ENCODE measurements at regions of chr4 and their contacts with region 1.

Region 1: DNA sequence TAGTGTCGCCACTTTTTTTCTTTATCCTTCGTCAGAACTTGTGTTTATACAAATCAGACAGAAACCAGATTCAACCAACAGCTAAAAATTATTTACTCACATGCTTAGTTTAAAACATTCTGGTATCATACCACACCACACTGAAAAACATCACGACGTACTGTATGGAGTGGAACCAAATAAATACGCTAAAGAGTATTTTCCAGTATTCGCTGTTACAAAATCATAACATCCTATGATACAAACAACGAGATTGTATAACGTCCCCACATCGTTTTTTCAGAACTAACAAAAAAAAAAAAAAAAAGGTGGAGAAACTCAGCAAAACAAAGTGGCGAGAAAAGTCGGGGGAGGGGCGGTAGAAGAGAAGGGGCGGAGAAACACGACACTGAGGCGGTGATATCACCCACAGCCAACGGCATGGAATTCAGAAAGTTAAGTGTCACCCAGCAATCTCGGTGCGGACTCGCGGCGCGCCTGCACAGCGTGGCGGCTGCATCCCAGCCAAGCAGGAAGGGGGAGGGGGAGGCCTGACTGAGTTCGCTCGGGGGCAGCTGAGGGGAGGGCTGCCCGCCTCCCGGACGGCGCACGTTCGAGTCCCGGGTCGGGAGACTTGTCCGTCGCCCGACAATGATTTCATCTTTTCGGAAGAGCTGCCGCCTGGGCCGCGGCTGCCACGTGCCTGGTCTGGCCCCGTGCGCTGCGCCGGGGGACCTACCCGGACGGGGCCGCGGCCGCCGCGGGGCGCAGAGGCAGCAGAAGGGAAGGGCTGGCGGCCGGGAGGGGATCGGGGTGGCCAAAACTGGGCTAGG is 920 bp downstream of the SETD7 start:
- DNase-seq: peak; percentile 43 to 89 (median 74)
- ATAC-seq: peak; percentile 75
- H3K4me3 ChIP-seq: peak overlapping the region; percentile 79 to 84
- H3K4me3 Mint-ChIP-seq: peak overlapping the region; percentile 94
- H3K27ac ChIP-seq: peak overlapping the region in 1 of 2 experiments; percentile 53
- H3K27ac Mint-ChIP-seq: peak overlapping the region; percentile 95
- H3K4me1 ChIP-seq: peaks cover 9% of the 10 kb centered on the region
- H3K4me1 Mint-ChIP-seq: peaks cover 31% of the 10 kb centered on the region
- H3K27me3 ChIP-seq: peaks cover 0 to 9% of the 10 kb centered on the region in 2 experiments
- H3K27me3 Mint-ChIP-seq: peaks cover 9% of the 10 kb centered on the region
- CTCF ChIP-seq: no peak

Region 2: DNA sequence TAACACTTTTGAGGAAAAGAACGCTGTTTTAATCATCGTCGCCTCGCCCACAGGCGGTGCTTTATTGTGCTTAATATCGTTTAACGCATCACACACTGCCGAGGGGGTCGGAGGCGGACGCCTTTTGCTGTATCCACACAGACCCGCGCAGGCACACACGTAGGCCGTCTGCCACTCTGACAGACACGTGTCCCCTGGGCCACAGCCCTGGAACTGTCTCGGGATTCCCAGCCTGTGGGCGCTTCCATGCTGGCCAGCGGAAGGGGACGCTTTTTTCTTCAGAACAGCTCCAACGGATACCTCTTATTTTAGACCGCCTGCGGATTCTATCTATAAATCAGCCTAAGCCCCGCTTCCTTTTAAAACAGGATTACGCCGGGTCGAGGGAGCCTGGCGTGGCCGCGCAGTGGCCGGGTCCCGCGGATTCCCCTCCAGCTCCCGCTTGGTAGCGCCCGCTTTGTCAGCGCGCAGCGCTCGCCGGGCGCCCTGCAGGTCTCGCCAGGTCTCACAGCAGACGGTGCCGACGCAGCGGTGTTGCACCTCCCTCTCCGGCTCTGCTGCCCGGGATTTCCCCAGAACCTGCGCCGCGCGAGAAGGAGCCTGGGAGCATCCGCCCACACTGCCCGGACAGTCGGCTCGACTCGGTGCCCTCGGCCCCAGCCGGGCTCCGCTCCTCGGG is 539.7 kb before region 1 on chr4 and contains the start of gene NOCT:
- CTCF ChIA-PET with region 1: no interaction called
- POLR2A ChIA-PET with region 1: no interaction called
- intact Hi-C with region 1: loop called in 1 of 2 experiments (anchors 10 kb)
- DNase-seq: peak; percentile 76 to 98 (median 90)
- ATAC-seq: peak; percentile 86
- H3K4me3 ChIP-seq: peak within 1 kb of the TSS; percentile 52 to 67
- H3K4me3 Mint-ChIP-seq: peak within 1 kb of the TSS; percentile 91
- H3K27ac ChIP-seq: peak within 1 kb of the TSS; percentile 75 to 92
- H3K27ac Mint-ChIP-seq: peak within 1 kb of the TSS; percentile 99
- H3K4me1 ChIP-seq: peaks cover 7% of the 10 kb centered on the region
- H3K4me1 Mint-ChIP-seq: peaks cover 30% of the 10 kb centered on the region
- H3K27me3 ChIP-seq: no peaks in the 10 kb centered on the region
- H3K27me3 Mint-ChIP-seq: no peaks in the 10 kb centered on the region
- CTCF ChIP-seq: no peak
- total RNA-seq, gene NOCT: 45.7 to 49.6 TPM